ENCODE measurements at regions of chr5 and their contacts with region 1.

Region 1: GRCh38 chr5:154690489-154690888 is 64.7 kb upstream of the LARP1 start:
- DNase-seq: no peak
- H3K4me3 ChIP-seq: no peak overlapping the region
- H3K27ac ChIP-seq: no peak overlapping the region
- H3K4me1 ChIP-seq: peaks cover 7 to 14% (median 10%) of the 10 kb centered on the region in 4 experiments; a peak in 6 of 7 replicates
- H3K27me3 ChIP-seq: no peaks in the 10 kb centered on the region
- CTCF ChIP-seq: no peak
- EP300 ChIP-seq: no peak
- POLR2A ChIP-seq: no peak
- RAD21 ChIP-seq: no peak

Region 2: GRCh38 chr5:154714266-154714986 is 23.9 kb after region 1 on chr5:
- CTCF ChIA-PET with region 1: interaction called, 27 read pairs
- POLR2A ChIA-PET with region 1: interaction called, 29 read pairs
- DNase-seq: no peak
- H3K4me3 ChIP-seq: no peak overlapping the region
- H3K27ac ChIP-seq: no peak overlapping the region
- H3K4me1 ChIP-seq: peaks cover 12 to 33% (median 24%) of the 10 kb centered on the region in 4 experiments
- H3K27me3 ChIP-seq: no peaks in the 10 kb centered on the region
- CTCF ChIP-seq: no peak
- EP300 ChIP-seq: no peak
- POLR2A ChIP-seq: no peak
- RAD21 ChIP-seq: no peak

Region 3: GRCh38 chr5:154771383-154771901 is 81.0 kb after region 1 on chr5:
- CTCF ChIA-PET with region 1: interaction called, 3 read pairs
- POLR2A ChIA-PET with region 1: interaction called, 10 read pairs
- DNase-seq: no peak
- H3K4me3 ChIP-seq: no peak overlapping the region
- H3K27ac ChIP-seq: no peak overlapping the region
- H3K4me1 ChIP-seq: peaks cover 10 to 57% (median 46%) of the 10 kb centered on the region in 4 experiments
- H3K27me3 ChIP-seq: no peaks in the 10 kb centered on the region
- CTCF ChIP-seq: peak; percentile 10 to 22 (median 22); a peak in 3 of 4 replicates
- EP300 ChIP-seq: no peak
- POLR2A ChIP-seq: no peak
- RAD21 ChIP-seq: peak in 1 of 2 experiments; percentile 31; a peak in 1 of 4 replicates

Measured in H1 (cell line).